A673 (cell line): ENCODE measurements at regions of chr1 and their contacts with region 1.

Region 1: GRCh38 chr1:30111431-30111830 is 612.0 kb downstream of the MATN1 start:
- DNase-seq: peak; percentile 83
- H3K4me3 ChIP-seq: no peak overlapping the region
- H3K27ac ChIP-seq: peak overlapping the region; percentile 55
- H3K4me1 ChIP-seq: peaks cover 8% of the 10 kb centered on the region
- H3K27me3 ChIP-seq: no peaks in the 10 kb centered on the region
- CTCF ChIP-seq: peak; percentile 77

Region 2: GRCh38 chr1:29732453-29732852 is 379.0 kb before region 1 on chr1:
- CTCF ChIA-PET with region 1: interaction called, 16 read pairs
- POLR2A ChIA-PET with region 1: no interaction called
- intact Hi-C with region 1: no loop called
- DNase-seq: no peak
- H3K4me3 ChIP-seq: no peak overlapping the region
- H3K27ac ChIP-seq: no peak overlapping the region
- H3K4me1 ChIP-seq: no peaks in the 10 kb centered on the region
- H3K27me3 ChIP-seq: no peaks in the 10 kb centered on the region
- CTCF ChIP-seq: no peak

Region 3: DNA sequence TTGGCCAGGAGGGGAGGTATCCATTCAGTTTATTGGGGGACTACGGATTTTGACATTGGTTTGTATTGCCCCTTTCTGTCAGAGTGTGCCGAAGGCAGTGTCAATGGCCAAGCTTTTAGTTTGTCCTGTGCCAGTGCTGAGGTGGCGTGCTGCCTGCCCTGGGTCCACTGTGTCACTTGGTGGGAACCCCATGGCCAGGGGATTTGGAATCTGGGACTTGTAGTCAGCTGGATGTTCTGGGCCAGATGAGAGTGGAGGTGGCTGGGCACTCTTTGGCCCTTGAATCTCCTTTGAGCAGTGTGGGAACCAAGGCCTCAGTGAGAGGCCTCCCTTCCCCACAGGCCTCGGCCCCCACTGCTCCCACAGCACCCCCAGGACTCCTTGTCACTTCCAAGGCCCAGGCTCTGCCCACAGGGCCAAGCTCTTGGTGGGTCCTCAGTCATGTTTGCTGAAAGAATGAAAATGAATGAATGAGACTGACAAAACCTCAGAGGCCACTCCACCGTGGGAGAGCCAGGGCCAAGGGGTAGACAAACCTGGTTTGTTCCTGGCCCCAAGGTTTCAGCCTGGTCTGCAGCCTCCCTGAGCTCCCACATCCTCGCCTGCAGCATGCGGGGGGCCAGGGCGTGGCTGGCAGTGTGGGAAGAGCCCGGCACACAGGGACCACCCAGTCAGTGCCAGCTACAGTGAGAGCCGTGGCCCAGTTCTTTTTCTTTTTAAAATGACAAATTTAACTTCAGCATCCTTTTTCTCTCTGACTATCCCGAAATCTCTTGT is 199.7 kb after region 1 on chr1:
- CTCF ChIA-PET with region 1: no interaction called
- POLR2A ChIA-PET with region 1: no interaction called
- intact Hi-C with region 1: no loop called
- DNase-seq: no peak
- H3K4me3 ChIP-seq: no peak overlapping the region
- H3K27ac ChIP-seq: no peak overlapping the region
- H3K4me1 ChIP-seq: no peaks in the 10 kb centered on the region
- H3K27me3 ChIP-seq: no peaks in the 10 kb centered on the region
- CTCF ChIP-seq: no peak